MCF 10A (cell line): ENCODE measurements at regions of chr15 and their contacts with region 1.

Region 1: DNA sequence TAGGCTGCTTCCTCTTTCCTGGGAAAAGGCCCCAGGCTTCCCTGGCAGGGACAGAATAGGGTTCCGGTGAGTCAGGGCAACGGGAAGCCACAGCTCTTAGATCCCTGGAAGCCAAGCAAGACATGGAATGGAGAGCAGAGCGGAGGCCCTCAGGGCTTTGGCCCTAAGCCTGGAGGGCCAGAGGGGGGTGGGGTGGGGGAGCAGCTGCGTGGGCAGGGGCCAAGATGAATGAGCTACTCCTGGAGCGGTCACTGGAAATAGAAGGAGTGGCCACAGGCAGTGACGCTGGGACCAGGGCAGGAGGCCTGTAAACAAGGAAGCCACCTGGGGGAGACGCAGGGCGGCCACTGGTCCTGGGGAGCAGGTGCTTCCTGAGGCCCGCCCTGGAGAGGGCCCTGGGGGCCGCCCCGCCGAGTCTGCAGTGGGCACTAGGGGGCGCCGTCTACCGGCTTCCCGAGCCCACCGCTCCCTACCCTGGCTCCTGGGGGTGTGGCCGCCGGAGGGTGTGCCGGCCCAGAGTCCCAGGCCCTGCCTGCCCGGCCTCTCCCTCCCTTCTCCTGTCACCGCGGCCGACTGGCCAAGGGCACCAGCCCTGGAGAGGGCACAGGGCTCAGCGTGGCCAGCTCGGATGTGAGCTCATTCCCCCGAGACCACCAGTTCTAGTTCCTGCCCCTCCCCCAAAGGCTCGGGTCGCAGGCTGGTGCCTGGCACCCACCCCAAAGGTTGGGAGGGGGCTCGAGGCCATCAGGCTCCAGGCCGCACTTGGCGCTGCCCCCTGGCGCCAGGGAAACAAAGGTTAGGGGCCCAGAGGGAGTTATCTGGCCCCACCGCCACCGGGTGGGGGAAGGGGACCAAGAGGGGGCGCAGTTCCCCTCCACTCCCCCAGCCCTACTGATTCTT is 12.1 kb downstream of the VPS18 start:
- DNase-seq: peak; percentile 97
- H3K4me3 Mint-ChIP-seq: peak overlapping the region; percentile 10
- H3K27ac Mint-ChIP-seq: peak overlapping the region; percentile 51
- H3K4me1 Mint-ChIP-seq: peaks cover 35% of the 10 kb centered on the region
- H3K27me3 Mint-ChIP-seq: no peaks in the 10 kb centered on the region
- CTCF ChIP-seq: peak; percentile 71

Region 2: GRCh38 chr15:40814901-40815670 is 91.3 kb before region 1 on chr15:
- CTCF ChIA-PET with region 1: no interaction called
- POLR2A ChIA-PET with region 1: no interaction called
- intact Hi-C with region 1: no loop called
- DNase-seq: peak; percentile 53
- H3K4me3 Mint-ChIP-seq: no peak overlapping the region
- H3K27ac Mint-ChIP-seq: no peak overlapping the region
- H3K4me1 Mint-ChIP-seq: peaks cover 6% of the 10 kb centered on the region
- H3K27me3 Mint-ChIP-seq: no peaks in the 10 kb centered on the region
- CTCF ChIP-seq: no peak

Region 3: DNA sequence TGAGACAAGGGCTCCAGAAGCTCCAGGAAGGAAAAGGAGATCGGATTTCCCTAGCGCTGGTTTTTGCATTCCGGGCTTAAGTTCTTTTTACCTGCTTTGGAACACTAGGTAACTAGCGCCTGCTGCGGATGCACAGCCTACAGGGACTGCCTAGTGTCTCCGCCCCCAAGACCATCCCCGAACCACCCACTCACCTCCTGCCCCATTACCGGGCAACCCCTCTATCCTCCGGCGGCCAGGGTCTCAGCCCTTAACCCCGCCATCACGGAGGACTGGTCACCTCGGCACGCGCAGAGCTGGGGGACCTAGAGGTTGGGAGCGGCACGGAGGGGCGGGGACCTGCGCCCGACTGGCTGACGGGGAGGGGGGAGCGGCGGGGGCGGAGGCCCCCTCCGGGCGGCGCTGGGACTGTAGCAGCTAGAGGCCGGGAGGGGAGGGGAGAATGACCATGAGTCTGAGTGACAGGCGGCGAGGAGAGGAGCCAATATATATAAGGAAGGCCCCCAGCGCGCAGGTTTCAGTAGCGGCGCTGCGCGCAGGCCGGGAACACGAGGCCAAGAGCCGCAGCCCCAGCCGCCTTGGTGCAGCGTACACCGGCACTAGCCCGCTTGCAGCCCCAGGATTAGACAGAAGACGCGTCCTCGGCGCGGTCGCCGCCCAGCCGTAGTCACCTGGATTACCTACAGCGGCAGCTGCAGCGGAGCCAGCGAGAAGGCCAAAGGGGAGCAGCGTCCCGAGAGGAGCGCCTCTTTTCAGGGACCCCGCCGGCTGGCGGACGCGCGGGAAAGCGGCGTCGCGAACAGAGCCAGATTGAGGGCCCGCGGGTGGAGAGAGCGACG is 22.7 kb after region 1 on chr15 and contains the start of gene DLL4:
- CTCF ChIA-PET with region 1: interaction called, 22 read pairs
- POLR2A ChIA-PET with region 1: interaction called, 5 read pairs
- intact Hi-C with region 1: no loop called
- DNase-seq: peak; percentile 57
- H3K4me3 Mint-ChIP-seq: peak within 1 kb of the TSS; percentile 72
- H3K27ac Mint-ChIP-seq: no peak within 1 kb of the TSS
- H3K4me1 Mint-ChIP-seq: peaks cover 13% of the 10 kb centered on the region
- H3K27me3 Mint-ChIP-seq: peaks cover 51% of the 10 kb centered on the region
- CTCF ChIP-seq: no peak
- total RNA-seq, gene DLL4: 0.10 TPM in 1 of 2 replicates, not detected in the other

Region 4: GRCh38 chr15:40952901-40953712 is 46.8 kb after region 1 on chr15 and contains the start of gene CHAC1:
- CTCF ChIA-PET with region 1: interaction called, 8 read pairs
- POLR2A ChIA-PET with region 1: no interaction called
- intact Hi-C with region 1: loop called (anchors 1 kb)
- DNase-seq: peak; percentile 98
- H3K4me3 Mint-ChIP-seq: peak within 1 kb of the TSS; percentile 87
- H3K27ac Mint-ChIP-seq: peak within 1 kb of the TSS; percentile 83
- H3K4me1 Mint-ChIP-seq: peaks cover 25% of the 10 kb centered on the region
- H3K27me3 Mint-ChIP-seq: no peaks in the 10 kb centered on the region
- CTCF ChIP-seq: no peak
- total RNA-seq, gene CHAC1: 35.5 and 49.4 TPM in 2 replicates

Region 5: GRCh38 chr15:41022487-41023090 is 116.2 kb after region 1 on chr15:
- CTCF ChIA-PET with region 1: interaction called, 115 read pairs
- POLR2A ChIA-PET with region 1: interaction called, 3 read pairs
- intact Hi-C with region 1: loop called (anchors 1 kb)
- DNase-seq: peak; percentile 48
- H3K4me3 Mint-ChIP-seq: no peak overlapping the region
- H3K27ac Mint-ChIP-seq: no peak overlapping the region
- H3K4me1 Mint-ChIP-seq: peaks cover 5% of the 10 kb centered on the region
- H3K27me3 Mint-ChIP-seq: no peaks in the 10 kb centered on the region
- CTCF ChIP-seq: peak; percentile 55

Region 6: GRCh38 chr15:41180206-41180789 is 274.0 kb after region 1 on chr15:
- CTCF ChIA-PET with region 1: interaction called, 76 read pairs
- POLR2A ChIA-PET with region 1: interaction called, 11 read pairs
- intact Hi-C with region 1: loop called (anchors 1 kb)
- DNase-seq: no peak
- H3K4me3 Mint-ChIP-seq: no peak overlapping the region
- H3K27ac Mint-ChIP-seq: no peak overlapping the region
- H3K4me1 Mint-ChIP-seq: no peaks in the 10 kb centered on the region
- H3K27me3 Mint-ChIP-seq: no peaks in the 10 kb centered on the region
- CTCF ChIP-seq: no peak

Region 7: DNA sequence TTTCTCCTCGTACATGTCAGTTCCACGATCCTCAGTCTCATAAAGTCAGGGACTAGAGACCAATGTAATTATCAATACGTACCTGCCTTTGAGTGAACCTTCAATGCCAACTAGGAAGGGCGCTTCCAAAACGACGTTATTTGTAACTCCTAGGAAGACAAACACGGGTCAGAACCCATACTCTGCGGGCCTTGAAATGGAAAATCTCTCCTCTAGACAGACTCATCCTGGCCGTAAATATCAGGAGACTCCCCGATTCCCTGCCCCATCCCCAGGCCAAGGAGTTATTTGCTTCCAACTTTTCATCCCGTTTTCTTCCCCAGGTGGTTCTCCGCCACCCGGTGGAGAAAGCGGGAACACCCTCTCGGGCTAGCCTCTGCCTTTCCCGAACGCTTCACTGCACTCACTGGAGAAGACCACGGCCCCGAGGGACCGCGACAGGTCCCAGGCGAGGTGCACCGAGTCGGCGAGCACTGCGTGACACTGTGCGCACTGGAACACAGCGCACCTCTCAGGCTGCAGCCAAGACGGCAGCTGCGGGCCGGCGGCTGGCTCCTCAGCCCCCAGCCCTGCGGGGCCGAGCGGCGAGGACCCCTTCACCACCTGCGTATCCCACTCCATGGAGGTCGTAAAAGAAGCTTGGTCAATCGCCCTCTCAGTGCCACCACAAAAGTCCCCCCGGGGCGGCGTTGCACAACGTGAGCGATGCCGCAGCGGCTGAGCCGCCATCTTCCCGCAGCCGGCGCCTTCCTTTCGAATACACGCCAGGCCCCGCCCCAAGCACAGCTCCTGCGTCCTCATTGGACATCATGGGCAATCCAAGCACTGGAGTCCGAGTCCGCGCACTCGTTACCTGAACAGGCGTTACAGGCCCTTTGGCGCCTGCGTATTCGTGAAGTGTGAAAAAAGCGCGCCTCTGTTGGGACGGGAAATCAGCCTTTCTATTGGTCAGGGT is 425.8 kb after region 1 on chr15 and contains the start of gene OIP5:
- CTCF ChIA-PET with region 1: interaction called, 10 read pairs
- POLR2A ChIA-PET with region 1: interaction called, 4 read pairs
- intact Hi-C with region 1: loop called (anchors 5 kb)
- DNase-seq: peak; percentile 100
- H3K4me3 Mint-ChIP-seq: peak within 1 kb of the TSS; percentile 98
- H3K27ac Mint-ChIP-seq: peak within 1 kb of the TSS; percentile 93
- H3K4me1 Mint-ChIP-seq: peaks cover 5% of the 10 kb centered on the region
- H3K27me3 Mint-ChIP-seq: no peaks in the 10 kb centered on the region
- CTCF ChIP-seq: peak; percentile 65
- total RNA-seq, gene OIP5: 2.9 and 5.7 TPM in 2 replicates